HepG2 (cell line): ENCODE measurements at regions of chr17 and their contacts with region 1.

Region 1: GRCh38 chr17:65017207-65017774 is 39.2 kb downstream of the GNA13 start:
- DNase-seq: peak; percentile 53
- ATAC-seq: peak; percentile 98
- H3K4me3 ChIP-seq: no peak overlapping the region
- H3K27ac ChIP-seq: no peak overlapping the region
- H3K4me1 ChIP-seq: peaks cover 38% of the 10 kb centered on the region
- H3K27me3 ChIP-seq: no peaks in the 10 kb centered on the region
- CTCF ChIP-seq: peak; percentile 45
- EP300 ChIP-seq: no peak
- POLR2A ChIP-seq: no peak
- RAD21 ChIP-seq: peak; percentile 32; the same call in 1 of the 2 replicates

Region 2: DNA sequence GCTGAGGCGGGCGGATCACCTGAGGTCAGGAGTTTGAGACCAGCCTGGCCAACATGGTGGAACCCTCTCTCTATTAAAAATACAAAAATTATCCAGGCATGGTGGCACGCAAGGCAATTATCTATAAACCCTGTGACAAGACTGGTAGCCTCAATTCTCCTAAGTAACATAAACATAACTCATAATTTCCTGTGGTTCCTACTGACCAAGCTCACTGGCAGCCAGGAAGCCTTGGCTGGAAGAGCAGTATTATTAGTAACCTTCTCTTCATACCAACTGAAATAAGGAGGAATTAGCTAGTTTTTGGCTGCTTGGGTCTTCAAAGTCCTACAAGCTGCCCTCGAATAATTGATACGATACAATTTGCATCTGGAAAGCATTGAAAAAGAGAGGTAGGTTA is 66.4 kb before region 1 on chr17:
- CTCF ChIA-PET with region 1: no interaction called
- POLR2A ChIA-PET with region 1: no interaction called
- in situ Hi-C with region 1: no loop called
- intact Hi-C with region 1: no loop called
- DNase-seq: no peak
- ATAC-seq: no peak
- H3K4me3 ChIP-seq: no peak overlapping the region
- H3K27ac ChIP-seq: no peak overlapping the region
- H3K4me1 ChIP-seq: no peaks in the 10 kb centered on the region
- H3K27me3 ChIP-seq: no peaks in the 10 kb centered on the region
- CTCF ChIP-seq: no peak
- EP300 ChIP-seq: no peak
- POLR2A ChIP-seq: no peak
- RAD21 ChIP-seq: no peak

Region 3: DNA sequence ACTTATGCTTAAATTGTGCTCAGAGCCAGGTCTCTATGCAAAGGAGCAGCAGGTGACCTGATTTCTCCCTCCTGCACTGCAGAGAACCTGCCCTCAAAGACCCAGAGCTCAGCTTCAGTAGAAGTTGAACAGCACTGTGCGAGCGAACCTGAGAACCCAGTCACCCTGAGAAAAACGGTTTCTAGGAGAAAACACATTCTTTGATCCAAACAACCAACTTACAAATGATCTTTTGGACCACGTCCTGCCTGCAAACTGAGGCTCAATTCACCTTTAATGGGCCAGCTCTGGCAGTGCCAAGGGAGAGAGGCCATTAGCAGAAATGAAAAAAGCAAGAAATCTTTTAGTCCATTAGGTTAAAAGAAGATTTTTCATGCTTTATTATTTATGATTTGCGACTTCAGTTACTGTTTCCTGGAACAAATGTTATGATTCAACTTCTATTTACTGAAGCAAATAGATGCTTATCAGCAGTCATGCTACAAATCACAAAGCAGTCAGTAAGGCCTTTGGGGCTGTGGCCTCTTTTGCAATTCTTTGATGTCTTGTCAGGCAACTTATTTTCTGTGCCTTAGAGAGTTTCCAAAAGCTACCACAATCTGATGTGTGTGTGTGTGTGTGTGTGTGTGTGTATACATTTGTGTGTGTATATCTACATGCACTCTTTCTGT is 32.3 kb before region 1 on chr17:
- CTCF ChIA-PET with region 1: no interaction called
- POLR2A ChIA-PET with region 1: no interaction called
- in situ Hi-C with region 1: no loop called
- intact Hi-C with region 1: loop called (anchors 5 kb)
- DNase-seq: peak; percentile 58
- ATAC-seq: peak; percentile 67
- H3K4me3 ChIP-seq: peak overlapping the region in 1 of 3 experiments; percentile 31; a peak in 1 of 6 replicates
- H3K27ac ChIP-seq: no peak overlapping the region
- H3K4me1 ChIP-seq: peaks cover 38% of the 10 kb centered on the region
- H3K27me3 ChIP-seq: no peaks in the 10 kb centered on the region
- CTCF ChIP-seq: no peak
- EP300 ChIP-seq: peak in 1 of 2 experiments; percentile 44; a peak in 1 of 4 replicates
- POLR2A ChIP-seq: no peak
- RAD21 ChIP-seq: no peak